MCF 10A (cell line): ENCODE measurements at regions of chr3 and their contacts with region 1.

Region 1: DNA sequence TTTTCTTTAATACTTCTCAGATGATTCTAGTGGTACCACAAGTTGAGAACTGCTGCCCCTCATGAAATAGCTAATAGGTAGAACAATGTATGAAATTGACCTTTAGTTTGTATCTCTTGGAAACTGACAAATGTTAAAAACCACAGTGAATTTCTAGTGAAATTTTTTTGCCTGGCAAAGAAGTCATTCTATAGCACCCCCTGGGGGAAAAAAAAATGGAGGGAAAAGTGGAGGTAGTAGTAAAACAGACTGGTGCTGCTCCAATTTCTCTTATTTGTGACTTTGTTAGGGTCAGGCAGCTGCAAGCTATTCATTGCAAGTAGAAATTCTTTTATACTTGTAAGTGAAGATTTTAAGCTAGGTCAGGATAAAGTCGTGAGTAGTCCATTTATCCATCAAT is 605.0 kb downstream of the NLGN1 start:
- DNase-seq: peak; percentile 36
- H3K4me3 Mint-ChIP-seq: no peak overlapping the region
- H3K27ac Mint-ChIP-seq: no peak overlapping the region
- H3K4me1 Mint-ChIP-seq: no peaks in the 10 kb centered on the region
- H3K27me3 Mint-ChIP-seq: peaks cover 87% of the 10 kb centered on the region
- CTCF ChIP-seq: peak; percentile 10

Region 2: DNA sequence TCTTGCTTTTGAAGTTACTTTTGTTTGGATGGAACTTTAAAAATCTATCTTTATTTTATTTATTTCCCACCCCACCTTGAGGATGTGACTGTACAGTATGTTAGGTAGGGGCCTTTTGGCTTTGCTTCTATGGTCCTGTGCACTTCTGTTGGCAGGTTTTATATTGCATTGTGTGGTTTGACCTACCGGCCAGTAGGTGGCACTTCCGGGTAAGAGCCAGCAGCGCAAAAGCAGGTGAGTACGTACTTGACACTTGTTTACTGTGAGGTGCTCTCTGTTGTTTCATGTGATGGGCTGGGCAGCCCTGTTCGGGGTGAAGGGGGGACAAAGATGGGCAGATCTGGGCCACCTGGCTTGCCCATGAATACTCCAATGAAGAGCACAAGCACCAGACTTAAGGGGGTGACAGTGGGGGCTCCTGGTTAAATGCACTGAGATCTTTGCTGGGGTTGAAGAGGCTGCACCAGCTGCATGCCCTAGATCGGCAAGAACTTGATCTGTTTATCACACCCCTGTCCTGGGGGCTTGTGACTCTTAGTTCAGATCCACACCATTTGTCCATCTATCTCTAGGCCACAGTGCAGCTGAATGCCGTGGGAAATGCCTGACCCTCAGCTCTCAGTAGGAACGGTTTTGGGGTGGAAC is 473.4 kb before region 1 on chr3:
- CTCF ChIA-PET with region 1: interaction called, 3 read pairs
- POLR2A ChIA-PET with region 1: no interaction called
- intact Hi-C with region 1: loop called (anchors 2 kb)
- DNase-seq: peak; percentile 54
- H3K4me3 Mint-ChIP-seq: no peak overlapping the region
- H3K27ac Mint-ChIP-seq: no peak overlapping the region
- H3K4me1 Mint-ChIP-seq: no peaks in the 10 kb centered on the region
- H3K27me3 Mint-ChIP-seq: peaks cover 91% of the 10 kb centered on the region
- CTCF ChIP-seq: peak; percentile 56

Region 3: DNA sequence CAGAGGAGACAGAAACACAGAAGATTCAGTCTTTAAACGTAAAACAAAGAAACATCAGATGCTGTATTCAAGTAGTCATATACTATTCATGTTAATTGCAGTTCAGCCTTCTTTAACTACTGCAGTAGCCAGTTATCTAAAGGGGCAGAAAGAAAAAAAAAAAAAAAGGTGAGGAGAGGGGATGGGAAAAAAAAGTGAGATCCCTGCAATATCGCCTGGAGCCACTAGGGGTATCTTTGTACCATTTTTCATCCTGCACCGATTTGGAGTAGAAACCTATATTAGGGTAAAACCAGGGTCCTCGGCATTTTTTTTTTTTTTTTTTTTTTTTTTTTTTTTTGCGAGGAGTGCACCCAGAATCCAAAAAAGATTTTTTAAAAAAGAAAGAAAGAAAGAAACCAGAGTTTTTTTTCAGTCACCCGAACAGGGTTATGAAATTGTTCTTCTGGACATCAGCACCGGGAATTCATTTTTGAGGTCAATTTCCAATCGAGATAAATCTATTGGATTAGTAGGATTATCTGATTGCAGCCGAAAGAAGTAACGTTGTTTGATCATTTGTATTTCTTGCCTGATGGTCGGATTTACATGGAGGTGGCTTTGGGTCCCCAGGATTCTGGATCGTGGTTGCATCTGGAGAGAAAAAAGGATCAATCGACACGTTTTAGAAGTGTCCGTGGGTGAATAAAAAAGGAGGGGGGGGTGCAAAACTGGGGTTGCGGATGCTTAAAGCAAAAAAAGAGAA is 418.3 kb before region 1 on chr3:
- CTCF ChIA-PET with region 1: no interaction called
- POLR2A ChIA-PET with region 1: no interaction called
- intact Hi-C with region 1: loop called (anchors 2 kb)
- DNase-seq: peak; percentile 38
- H3K4me3 Mint-ChIP-seq: no peak overlapping the region
- H3K27ac Mint-ChIP-seq: no peak overlapping the region
- H3K4me1 Mint-ChIP-seq: peaks cover 5% of the 10 kb centered on the region
- H3K27me3 Mint-ChIP-seq: peaks cover 92% of the 10 kb centered on the region
- CTCF ChIP-seq: peak; percentile 51

Region 4: GRCh38 chr3:173733029-173733652 is 269.4 kb before region 1 on chr3:
- CTCF ChIA-PET with region 1: interaction called, 6 read pairs
- POLR2A ChIA-PET with region 1: no interaction called
- intact Hi-C with region 1: loop called (anchors 1 kb)
- DNase-seq: peak; percentile 52
- H3K4me3 Mint-ChIP-seq: no peak overlapping the region
- H3K27ac Mint-ChIP-seq: no peak overlapping the region
- H3K4me1 Mint-ChIP-seq: peaks cover 6% of the 10 kb centered on the region
- H3K27me3 Mint-ChIP-seq: peaks cover 5% of the 10 kb centered on the region
- CTCF ChIP-seq: peak; percentile 41

Region 5: DNA sequence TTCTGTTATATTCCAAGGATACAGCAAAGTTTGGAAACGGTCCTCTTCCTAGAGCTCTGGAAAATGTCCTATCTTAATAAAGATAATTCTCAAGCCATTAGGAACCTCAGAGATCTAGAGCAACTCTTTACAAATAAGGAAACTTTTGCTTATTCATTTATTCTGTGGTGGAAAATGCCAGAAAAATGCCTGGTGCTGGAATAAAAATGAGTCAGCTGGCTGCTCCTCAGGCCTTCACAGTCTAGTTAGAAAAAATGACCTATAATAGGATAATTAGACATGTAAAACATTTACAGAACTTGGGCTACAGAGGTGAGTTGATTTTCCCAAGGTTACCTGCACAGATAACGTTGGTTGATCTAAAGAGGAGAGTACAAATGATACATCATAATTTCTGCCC is 232.5 kb before region 1 on chr3:
- CTCF ChIA-PET with region 1: no interaction called
- POLR2A ChIA-PET with region 1: no interaction called
- intact Hi-C with region 1: no loop called
- DNase-seq: no peak
- H3K4me3 Mint-ChIP-seq: no peak overlapping the region
- H3K27ac Mint-ChIP-seq: no peak overlapping the region
- H3K4me1 Mint-ChIP-seq: peaks cover 7% of the 10 kb centered on the region
- H3K27me3 Mint-ChIP-seq: no peaks in the 10 kb centered on the region
- CTCF ChIP-seq: no peak